HepG2 (cell line): ENCODE measurements at regions of chr1 and their contacts with region 1.

Region 1: GRCh38 chr1:50605186-50605875 is 182.1 kb upstream of the DMRTA2 start:
- DNase-seq: peak; percentile 56
- ATAC-seq: peak; percentile 72
- H3K4me3 ChIP-seq: no peak overlapping the region
- H3K27ac ChIP-seq: no peak overlapping the region
- H3K4me1 ChIP-seq: no peaks in the 10 kb centered on the region
- H3K27me3 ChIP-seq: no peaks in the 10 kb centered on the region
- CTCF ChIP-seq: peak; percentile 73
- EP300 ChIP-seq: no peak
- POLR2A ChIP-seq: no peak
- RAD21 ChIP-seq: no peak

Region 2: GRCh38 chr1:50368179-50369012 is 236.9 kb before region 1 on chr1:
- CTCF ChIA-PET with region 1: interaction called, 48 read pairs
- POLR2A ChIA-PET with region 1: no interaction called
- in situ Hi-C with region 1: loop called (anchors 5 kb)
- intact Hi-C with region 1: loop called (anchors 1 kb)
- DNase-seq: peak; percentile 17
- ATAC-seq: peak; percentile 88
- H3K4me3 ChIP-seq: peak overlapping the region in 1 of 3 experiments; percentile 41; a peak in 1 of 6 replicates
- H3K27ac ChIP-seq: no peak overlapping the region
- H3K4me1 ChIP-seq: no peaks in the 10 kb centered on the region
- H3K27me3 ChIP-seq: peaks cover 0 to 15% of the 10 kb centered on the region in 2 experiments; a peak in 3 of 5 replicates
- CTCF ChIP-seq: peak; percentile 84
- EP300 ChIP-seq: no peak
- POLR2A ChIP-seq: no peak
- RAD21 ChIP-seq: peak; percentile 62; the same call in 1 of the 2 replicates

Region 3: DNA sequence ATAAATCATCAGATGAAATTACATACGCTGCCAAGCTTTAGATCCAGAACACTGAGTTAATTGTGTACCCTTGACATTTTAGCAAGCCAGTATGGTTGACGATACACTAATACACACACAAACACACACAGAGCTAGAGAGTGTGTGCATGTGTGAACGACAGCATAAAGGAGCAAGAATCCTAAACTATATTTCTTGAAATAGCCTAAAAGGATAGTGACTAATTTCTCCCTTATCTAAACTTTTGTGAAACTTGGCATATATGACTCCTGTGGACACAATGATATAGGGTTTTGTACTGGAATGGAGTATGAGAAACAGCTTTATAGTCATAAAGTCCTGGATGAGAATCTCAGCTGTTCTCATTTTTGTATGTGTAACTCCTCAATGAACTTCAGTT is 117.0 kb before region 1 on chr1:
- CTCF ChIA-PET with region 1: no interaction called
- POLR2A ChIA-PET with region 1: no interaction called
- in situ Hi-C with region 1: no loop called
- intact Hi-C with region 1: loop called (anchors 10 kb)
- DNase-seq: no peak
- ATAC-seq: no peak
- H3K4me3 ChIP-seq: no peak overlapping the region
- H3K27ac ChIP-seq: no peak overlapping the region
- H3K4me1 ChIP-seq: no peaks in the 10 kb centered on the region
- H3K27me3 ChIP-seq: no peaks in the 10 kb centered on the region
- CTCF ChIP-seq: no peak
- EP300 ChIP-seq: no peak
- POLR2A ChIP-seq: no peak
- RAD21 ChIP-seq: no peak

Region 4: GRCh38 chr1:50633465-50633864 is 28.1 kb after region 1 on chr1:
- CTCF ChIA-PET with region 1: no interaction called
- POLR2A ChIA-PET with region 1: no interaction called
- in situ Hi-C with region 1: no loop called
- intact Hi-C with region 1: no loop called
- DNase-seq: peak; percentile 21
- ATAC-seq: no peak
- H3K4me3 ChIP-seq: no peak overlapping the region
- H3K27ac ChIP-seq: no peak overlapping the region
- H3K4me1 ChIP-seq: no peaks in the 10 kb centered on the region
- H3K27me3 ChIP-seq: no peaks in the 10 kb centered on the region
- CTCF ChIP-seq: no peak
- EP300 ChIP-seq: no peak
- POLR2A ChIP-seq: no peak
- RAD21 ChIP-seq: no peak

Region 5: DNA sequence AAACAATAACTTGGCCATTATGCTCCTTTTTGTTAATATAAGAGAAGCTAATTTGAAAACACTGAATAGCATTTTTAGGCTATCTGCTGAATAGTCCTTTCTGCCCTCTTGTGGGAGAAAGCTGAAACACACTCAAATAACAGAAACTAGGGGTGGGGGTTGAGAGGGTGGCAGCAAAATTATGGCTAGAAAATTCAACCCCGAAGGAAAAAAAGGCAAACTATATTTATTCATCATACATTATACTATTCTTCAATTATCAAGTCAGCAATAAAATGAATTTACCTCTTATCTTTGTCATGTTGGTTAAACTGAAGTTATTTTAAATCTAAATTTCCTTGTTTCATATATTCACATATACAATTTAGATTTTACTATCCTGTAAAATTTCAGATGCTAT is 98.8 kb after region 1 on chr1:
- CTCF ChIA-PET with region 1: no interaction called
- POLR2A ChIA-PET with region 1: no interaction called
- in situ Hi-C with region 1: loop called (anchors 25 kb)
- intact Hi-C with region 1: no loop called
- DNase-seq: peak; percentile 38
- ATAC-seq: peak; percentile 62; the same call in 2 of the 3 replicates
- H3K4me3 ChIP-seq: no peak overlapping the region
- H3K27ac ChIP-seq: no peak overlapping the region
- H3K4me1 ChIP-seq: no peaks in the 10 kb centered on the region
- H3K27me3 ChIP-seq: no peaks in the 10 kb centered on the region
- CTCF ChIP-seq: peak; percentile 61
- EP300 ChIP-seq: no peak
- POLR2A ChIP-seq: no peak
- RAD21 ChIP-seq: no peak